ENCODE measurements at regions of chr1 and their contacts with region 1.

Region 1: GRCh38 chr1:92994105-92994712 is 32.9 kb upstream of the DIPK1A start:
- DNase-seq: peak; percentile 91
- H3K4me3 Mint-ChIP-seq: no peak overlapping the region
- H3K27ac Mint-ChIP-seq: peak overlapping the region; percentile 39
- H3K4me1 Mint-ChIP-seq: peaks cover 56% of the 10 kb centered on the region
- H3K27me3 Mint-ChIP-seq: no peaks in the 10 kb centered on the region

Region 2: DNA sequence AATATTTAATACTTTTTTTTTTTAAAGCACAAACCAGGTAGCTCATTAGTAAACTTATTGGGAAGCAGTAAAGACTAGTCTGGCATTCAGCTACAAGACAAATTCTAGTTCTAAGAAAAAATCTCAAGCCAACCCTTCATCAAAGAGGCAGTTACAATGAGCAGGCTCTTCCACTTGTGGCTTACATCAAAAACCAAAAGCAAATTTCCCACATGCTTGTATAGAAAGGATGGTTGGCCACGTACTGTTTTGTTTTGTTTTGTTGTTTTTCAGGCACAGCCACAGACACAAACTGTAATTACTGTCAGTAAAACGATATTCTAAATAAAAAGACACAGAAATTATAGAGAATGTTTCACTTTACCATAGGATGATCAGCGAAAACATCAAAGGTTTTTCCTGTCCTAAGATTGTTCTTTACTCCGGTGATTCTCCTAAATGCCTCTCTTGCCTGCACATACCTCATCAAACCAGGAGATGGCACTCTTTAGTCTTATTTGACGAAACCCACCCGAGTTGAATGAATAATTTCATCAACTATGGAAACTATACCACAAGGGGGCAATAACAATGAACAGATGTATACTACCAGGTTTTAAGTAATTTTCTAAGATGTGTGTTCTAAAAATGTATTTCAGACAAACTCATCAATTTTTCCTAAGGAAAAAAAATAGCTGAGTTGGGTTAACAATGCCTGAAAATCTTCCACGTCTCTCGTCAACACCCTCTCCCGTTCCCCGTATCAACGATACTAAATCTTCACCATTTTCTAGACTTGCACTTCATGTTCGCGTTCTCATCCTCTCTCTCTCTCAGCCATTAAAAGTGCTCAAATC is 135.4 kb before region 1 on chr1:
- CTCF ChIA-PET with region 1: interaction called, 21 read pairs
- POLR2A ChIA-PET with region 1: no interaction called
- DNase-seq: peak; percentile 71
- H3K4me3 Mint-ChIP-seq: peak overlapping the region; percentile 33
- H3K27ac Mint-ChIP-seq: peak overlapping the region; percentile 21
- H3K4me1 Mint-ChIP-seq: peaks cover 38% of the 10 kb centered on the region
- H3K27me3 Mint-ChIP-seq: no peaks in the 10 kb centered on the region

Region 3: DNA sequence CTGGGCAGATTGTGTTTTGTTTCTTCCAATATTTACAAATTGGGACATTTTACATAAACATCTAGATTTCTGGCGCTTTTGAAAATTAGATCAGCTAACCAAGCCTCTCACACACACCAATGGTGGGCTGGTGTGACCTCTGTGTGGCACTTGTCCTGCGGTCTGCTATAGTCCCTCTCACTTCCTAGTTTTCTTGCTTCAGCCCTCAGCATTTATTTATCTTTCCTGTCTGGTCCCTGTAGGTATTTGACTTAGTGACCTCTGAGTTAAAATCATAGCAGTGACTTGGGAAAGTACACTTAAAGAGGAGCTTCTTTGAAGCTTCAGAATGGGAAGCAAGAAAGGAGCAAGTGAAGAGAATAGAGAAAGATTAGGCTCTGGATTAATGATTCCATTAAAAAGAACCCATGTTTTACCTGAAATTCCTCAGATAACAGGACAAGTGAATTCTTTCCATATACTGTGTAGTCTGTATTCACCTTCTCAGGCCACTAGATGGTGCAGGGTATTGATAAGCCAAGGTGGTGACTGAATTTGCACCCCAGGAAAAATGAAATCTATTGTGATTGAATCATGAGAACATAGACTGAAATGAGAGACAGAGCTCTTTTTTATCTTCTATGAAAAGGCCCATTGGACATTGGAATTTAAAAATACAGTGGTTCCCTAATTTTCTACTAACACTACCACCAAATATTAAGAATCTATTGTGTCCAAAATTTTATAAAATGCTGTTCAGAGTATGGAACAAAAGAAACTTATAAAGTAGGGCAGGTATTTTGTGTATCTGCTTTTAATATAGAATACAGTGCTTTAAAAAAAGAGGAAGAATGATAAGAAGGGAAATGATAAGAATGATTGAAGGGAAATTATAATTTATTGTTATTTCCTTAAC is 25.8 kb before region 1 on chr1:
- CTCF ChIA-PET with region 1: interaction called, 80 read pairs
- POLR2A ChIA-PET with region 1: interaction called, 4 read pairs
- DNase-seq: peak; percentile 62
- H3K4me3 Mint-ChIP-seq: no peak overlapping the region
- H3K27ac Mint-ChIP-seq: no peak overlapping the region
- H3K4me1 Mint-ChIP-seq: peaks cover 34% of the 10 kb centered on the region
- H3K27me3 Mint-ChIP-seq: no peaks in the 10 kb centered on the region

Region 4: DNA sequence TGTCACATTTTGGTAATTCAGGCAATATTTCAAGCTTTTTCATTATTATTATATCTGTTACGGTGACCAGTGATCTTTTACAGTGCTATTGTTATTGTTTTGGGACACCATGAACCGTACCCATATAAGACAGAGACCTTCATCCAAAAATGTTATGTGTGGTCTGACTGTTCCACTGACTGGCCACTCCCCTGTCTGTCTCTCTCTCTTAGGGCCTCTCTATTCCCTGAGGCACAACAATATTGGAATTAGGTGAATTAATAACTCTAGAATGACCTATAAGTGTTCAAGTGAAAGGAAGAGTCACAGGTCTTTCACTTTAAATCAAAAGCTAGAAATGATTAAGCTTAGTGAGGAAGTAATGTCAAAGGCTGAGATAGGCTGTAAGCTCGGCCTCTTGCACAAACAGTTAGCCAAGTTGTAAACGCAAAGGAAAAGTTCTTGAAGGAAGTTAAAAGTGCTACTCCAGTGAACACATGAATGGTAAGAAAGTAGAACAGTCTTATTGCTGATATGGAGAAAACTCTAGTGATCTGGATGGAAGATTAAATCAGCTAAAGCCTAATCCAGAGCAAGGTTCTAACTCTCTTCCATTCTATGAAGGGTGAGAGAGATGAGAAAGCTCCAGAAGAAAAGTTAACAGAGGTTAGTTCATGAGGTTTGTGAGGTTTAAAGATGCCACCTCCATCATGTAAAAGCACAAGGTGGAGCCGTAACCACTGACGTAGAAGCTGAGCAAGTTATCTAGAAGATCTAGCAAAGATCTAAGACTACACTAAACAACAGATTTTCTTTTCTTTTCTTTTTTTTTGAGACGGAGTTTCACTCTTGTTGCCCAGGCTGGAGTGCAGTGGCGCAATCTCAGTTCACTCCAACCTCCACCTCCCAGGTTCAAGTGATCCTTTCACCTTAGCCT is 13.2 kb before region 1 on chr1:
- CTCF ChIA-PET with region 1: interaction called, 80 read pairs
- POLR2A ChIA-PET with region 1: no interaction called
- DNase-seq: peak; percentile 78
- H3K4me3 Mint-ChIP-seq: peak overlapping the region; percentile 27
- H3K27ac Mint-ChIP-seq: peak overlapping the region; percentile 98
- H3K4me1 Mint-ChIP-seq: peaks cover 59% of the 10 kb centered on the region
- H3K27me3 Mint-ChIP-seq: no peaks in the 10 kb centered on the region

Region 5: DNA sequence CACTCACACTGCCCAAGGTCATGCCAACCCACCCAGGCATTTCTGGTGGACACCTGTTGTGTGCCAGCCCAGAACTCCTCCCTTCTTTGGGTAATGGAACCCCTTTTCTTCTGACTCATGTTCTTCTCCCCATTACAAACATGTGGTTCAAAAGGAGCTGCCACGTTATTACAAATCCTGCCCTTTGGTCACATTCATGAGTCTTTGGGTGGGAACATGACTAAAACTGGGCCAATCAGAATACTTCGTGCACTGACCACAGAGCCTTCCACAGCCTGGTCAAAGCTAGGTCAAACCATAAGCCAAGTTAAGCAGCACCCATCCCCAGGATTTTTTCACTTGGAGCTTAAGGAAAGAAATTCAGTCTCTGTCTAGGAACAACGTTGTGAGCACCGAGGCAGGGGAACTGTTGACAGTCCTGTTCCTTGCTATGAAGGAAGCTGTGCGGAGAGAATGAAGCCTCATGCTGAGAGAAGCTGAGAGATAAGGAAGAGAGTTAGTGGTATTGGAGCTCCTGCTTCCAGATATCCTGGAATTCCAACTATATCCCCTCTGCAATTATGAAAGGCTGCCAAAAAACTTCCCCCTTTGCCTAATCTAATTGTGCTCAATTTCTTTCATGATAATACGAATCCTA is 13.8 kb after region 1 on chr1:
- CTCF ChIA-PET with region 1: interaction called, 21 read pairs
- POLR2A ChIA-PET with region 1: no interaction called
- DNase-seq: no peak
- H3K4me3 Mint-ChIP-seq: no peak overlapping the region
- H3K27ac Mint-ChIP-seq: no peak overlapping the region
- H3K4me1 Mint-ChIP-seq: peaks cover 8% of the 10 kb centered on the region
- H3K27me3 Mint-ChIP-seq: peaks cover 14% of the 10 kb centered on the region